ENCODE measurements at regions of chr2 and their contacts with region 1.

Region 1: GRCh38 chr2:96951093-96951654 is 35.2 kb downstream of the FAM178B start:
- DNase-seq: no peak
- H3K4me3 ChIP-seq: no peak overlapping the region
- H3K27ac ChIP-seq: peak overlapping the region; percentile 6 to 85 (median 53)
- H3K4me1 ChIP-seq: peaks cover 42 to 63% (median 57%) of the 10 kb centered on the region in 4 donors
- H3K27me3 ChIP-seq: no peaks in the 10 kb centered on the region
- CTCF ChIP-seq: peak; percentile 89 to 97 (median 94)
- EP300 ChIP-seq: no peak
- POLR2A ChIP-seq: no peak

Region 2: GRCh38 chr2:96856776-96857673 is 94.1 kb before region 1 on chr2:
- intact Hi-C with region 1: loop called (anchors 2 kb)
- DNase-seq: no peak
- H3K4me3 ChIP-seq: peak overlapping the region; percentile 65 to 82 (median 70)
- H3K27ac ChIP-seq: peak overlapping the region; percentile 84 to 100 (median 85)
- H3K4me1 ChIP-seq: peaks cover 35 to 66% (median 63%) of the 10 kb centered on the region in 4 donors
- H3K27me3 ChIP-seq: no peaks in the 10 kb centered on the region
- CTCF ChIP-seq: no peak
- EP300 ChIP-seq: no peak
- POLR2A ChIP-seq: no peak

Region 3: GRCh38 chr2:96868555-96869280 is 82.5 kb before region 1 on chr2:
- intact Hi-C with region 1: loop called (anchors 1 kb)
- DNase-seq: no peak
- H3K4me3 ChIP-seq: peak overlapping the region; percentile 89 to 99 (median 90)
- H3K27ac ChIP-seq: peak overlapping the region; percentile 98 to 100 (median 99)
- H3K4me1 ChIP-seq: peaks cover 44 to 81% (median 75%) of the 10 kb centered on the region in 4 donors
- H3K27me3 ChIP-seq: no peaks in the 10 kb centered on the region
- CTCF ChIP-seq: peak; percentile 43 to 64 (median 56)
- EP300 ChIP-seq: no peak
- POLR2A ChIP-seq: peak; percentile 33

Region 4: GRCh38 chr2:96907115-96908041 is 43.8 kb before region 1 on chr2:
- intact Hi-C with region 1: loop called (anchors 5 kb)
- DNase-seq: peak; percentile 95
- H3K4me3 ChIP-seq: peak overlapping the region; percentile 28 to 48 (median 46)
- H3K27ac ChIP-seq: peak overlapping the region; percentile 92 to 98 (median 93)
- H3K4me1 ChIP-seq: peaks cover 47 to 62% (median 57%) of the 10 kb centered on the region in 4 donors
- H3K27me3 ChIP-seq: no peaks in the 10 kb centered on the region
- CTCF ChIP-seq: peak in 1 of 3 experiments; percentile 31
- EP300 ChIP-seq: no peak
- POLR2A ChIP-seq: no peak

Region 5: GRCh38 chr2:97728091-97728731 is 777.0 kb after region 1 on chr2:
- intact Hi-C with region 1: no loop called
- DNase-seq: no peak
- H3K4me3 ChIP-seq: no peak overlapping the region
- H3K27ac ChIP-seq: no peak overlapping the region
- H3K4me1 ChIP-seq: peaks cover 0 to 17% (median 10%) of the 10 kb centered on the region in 4 donors
- H3K27me3 ChIP-seq: peaks cover 0 to 19% (median 3%) of the 10 kb centered on the region in 4 donors
- CTCF ChIP-seq: no peak
- EP300 ChIP-seq: no peak
- POLR2A ChIP-seq: no peak